ENCODE measurements at regions of chr13 and their contacts with region 1.

Region 1: DNA sequence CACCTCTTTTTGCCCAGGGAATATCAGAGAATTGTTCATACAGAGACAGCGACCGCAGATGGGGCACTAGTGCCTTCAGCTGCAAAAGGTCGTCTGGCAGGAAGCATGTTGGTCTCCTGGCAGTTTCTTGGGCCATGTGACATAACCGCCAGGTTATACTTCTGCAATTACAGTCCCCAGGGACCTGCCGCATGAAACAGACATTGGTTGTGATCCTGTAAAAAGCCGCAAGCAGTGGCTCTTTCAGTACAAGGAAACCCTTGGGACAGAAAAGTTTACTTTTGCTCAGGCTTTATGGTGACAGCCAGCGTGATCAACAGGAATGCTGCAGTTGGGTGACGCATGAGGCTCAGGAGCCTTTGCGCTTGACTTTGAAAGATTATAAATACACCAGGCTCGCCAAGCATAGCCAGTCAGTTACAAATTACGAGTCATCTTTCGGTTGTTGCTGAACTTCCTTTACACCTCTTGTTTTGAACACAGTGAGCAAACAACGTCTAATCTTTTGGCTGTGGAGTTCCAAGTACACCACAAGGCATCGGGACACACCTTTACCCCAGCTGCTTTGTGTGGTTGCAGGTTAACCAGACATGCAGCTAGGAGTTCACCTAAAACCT is 50.5 kb upstream of the UBE2L5 start:
- DNase-seq: peak; percentile 91
- H3K4me3 Mint-ChIP-seq: peak overlapping the region; percentile 85
- H3K27ac Mint-ChIP-seq: peak overlapping the region; percentile 91
- H3K4me1 Mint-ChIP-seq: peaks cover 75% of the 10 kb centered on the region
- H3K27me3 Mint-ChIP-seq: no peaks in the 10 kb centered on the region

Region 2: DNA sequence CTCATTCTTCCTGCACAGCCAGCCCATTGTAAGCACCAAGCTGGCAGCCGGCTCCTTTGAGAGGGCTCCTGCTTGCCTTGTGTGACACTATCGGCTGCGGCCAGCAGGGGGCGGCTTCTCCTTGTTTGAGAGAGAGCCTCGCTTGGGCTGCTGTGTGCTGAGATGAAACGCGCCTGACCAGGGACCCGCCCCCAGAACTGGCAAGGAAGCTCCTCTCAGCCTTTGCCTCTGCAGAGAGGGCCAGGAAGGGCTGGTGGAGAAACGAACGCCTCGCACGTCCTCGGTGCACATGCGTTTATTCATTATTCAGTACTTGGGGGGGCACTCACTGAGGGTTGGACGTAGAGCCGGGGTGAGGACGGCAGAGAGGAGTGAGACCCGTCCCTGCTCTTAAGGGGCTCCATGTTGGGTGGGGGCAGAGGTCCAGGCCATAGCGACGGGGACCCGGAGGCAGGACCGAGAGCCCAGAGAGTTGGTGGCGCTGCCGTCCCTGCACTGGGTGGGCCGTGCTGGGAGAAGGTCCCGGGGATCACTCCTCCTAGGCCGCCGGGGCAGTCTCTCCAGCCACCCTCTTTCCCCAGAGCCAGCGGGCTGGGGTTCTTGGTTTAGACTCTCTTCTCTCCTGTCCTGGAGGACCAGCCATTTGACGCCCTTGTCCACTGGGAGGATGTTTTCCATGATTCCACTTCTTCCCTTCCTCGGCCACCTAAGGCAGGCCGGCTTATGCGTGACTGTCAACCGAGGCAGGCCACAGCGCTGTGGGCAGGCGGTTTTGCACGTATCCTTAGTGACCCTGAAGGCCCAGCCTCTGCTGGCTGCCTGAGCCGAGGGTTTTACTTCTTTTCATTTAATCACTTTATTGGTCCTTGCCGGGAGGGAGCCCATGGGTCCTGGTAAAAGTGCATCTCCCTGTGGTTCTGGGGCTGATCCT is 238.9 kb before region 1 on chr13:
- intact Hi-C with region 1: loop called (anchors 5 kb)
- DNase-seq: peak; percentile 99
- H3K4me3 Mint-ChIP-seq: peak overlapping the region; percentile 19
- H3K27ac Mint-ChIP-seq: peak overlapping the region; percentile 59
- H3K4me1 Mint-ChIP-seq: peaks cover 19% of the 10 kb centered on the region
- H3K27me3 Mint-ChIP-seq: no peaks in the 10 kb centered on the region

Region 3: DNA sequence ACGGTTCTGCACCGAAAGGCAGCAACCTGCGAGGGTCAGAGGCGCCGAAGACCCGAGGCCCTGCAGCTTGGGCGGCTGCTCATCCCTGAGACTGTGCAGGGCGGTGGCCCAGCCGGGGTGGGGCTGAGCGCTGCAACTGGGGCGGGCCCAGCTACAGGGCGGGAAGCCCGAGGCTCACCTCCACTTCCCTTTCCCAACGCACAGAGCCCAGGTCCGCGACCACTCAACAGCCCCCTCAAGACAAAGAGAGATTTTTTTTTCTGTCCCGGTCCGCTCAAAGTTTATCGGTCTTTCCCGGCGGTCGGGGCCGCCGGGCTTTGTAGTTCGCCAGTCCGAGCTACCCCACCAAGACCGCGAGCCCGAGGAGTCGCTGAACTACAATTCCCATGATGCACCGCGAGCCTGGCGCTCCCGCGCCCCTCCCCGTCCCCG is 65.0 kb before region 1 on chr13:
- intact Hi-C with region 1: loop called (anchors 1 kb)
- DNase-seq: peak; percentile 98
- H3K4me3 Mint-ChIP-seq: peak overlapping the region; percentile 89
- H3K27ac Mint-ChIP-seq: peak overlapping the region; percentile 87
- H3K4me1 Mint-ChIP-seq: peaks cover 46% of the 10 kb centered on the region
- H3K27me3 Mint-ChIP-seq: no peaks in the 10 kb centered on the region

Region 4: GRCh38 chr13:30388406-30389283 is 16.9 kb after region 1 on chr13:
- intact Hi-C with region 1: loop called (anchors 1 kb)
- DNase-seq: no peak
- H3K4me3 Mint-ChIP-seq: peak overlapping the region; percentile 74
- H3K27ac Mint-ChIP-seq: peak overlapping the region; percentile 86
- H3K4me1 Mint-ChIP-seq: peaks cover 42% of the 10 kb centered on the region
- H3K27me3 Mint-ChIP-seq: no peaks in the 10 kb centered on the region

Region 5: GRCh38 chr13:30422054-30422839 is 50.5 kb after region 1 on chr13 and contains the start of gene UBE2L5:
- intact Hi-C with region 1: loop called (anchors 5 kb)
- DNase-seq: peak; percentile 95
- H3K4me3 Mint-ChIP-seq: peak within 1 kb of the TSS; percentile 89
- H3K27ac Mint-ChIP-seq: peak within 1 kb of the TSS; percentile 86
- H3K4me1 Mint-ChIP-seq: peaks cover 26% of the 10 kb centered on the region
- H3K27me3 Mint-ChIP-seq: no peaks in the 10 kb centered on the region
- total RNA-seq, gene UBE2L5: not detected in 2 replicates

Region 6: DNA sequence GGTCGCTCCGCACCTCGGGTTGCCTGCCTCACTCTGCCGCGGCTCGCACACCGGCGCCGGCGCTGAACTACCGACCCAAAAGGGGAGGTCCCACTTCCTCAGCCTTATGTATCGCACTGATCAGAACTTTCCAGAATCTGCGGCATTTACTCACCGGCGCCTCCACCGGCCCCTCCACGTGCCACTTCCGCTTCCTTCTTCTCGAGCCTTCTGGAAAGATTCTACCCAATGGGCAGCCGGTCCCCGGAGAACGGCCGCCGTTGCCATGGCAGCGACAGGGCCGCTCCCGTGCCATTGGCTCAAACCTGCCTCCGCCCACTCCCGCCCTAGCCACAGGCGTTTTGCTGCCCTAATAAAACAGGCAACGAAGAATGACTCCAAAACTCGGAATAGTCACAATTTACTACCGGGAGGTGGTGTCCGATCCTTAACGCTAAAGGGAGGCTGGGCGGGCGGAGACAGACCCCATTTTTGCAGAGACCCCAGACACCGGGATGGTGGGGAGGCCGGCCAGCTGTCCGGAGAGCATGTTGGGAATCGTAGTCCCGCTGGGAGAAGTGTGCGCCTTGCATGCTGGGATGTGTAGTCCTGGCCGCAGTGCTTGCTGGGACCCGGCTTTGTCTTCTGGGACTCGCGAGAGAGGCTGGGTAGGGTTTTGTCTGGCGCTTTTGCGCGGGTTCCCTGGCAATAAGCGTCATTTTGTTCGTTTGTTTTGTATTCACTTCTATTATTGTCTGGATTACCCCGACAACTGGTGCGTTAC is 790.3 kb after region 1 on chr13 and contains the start of gene HSPH1:
- intact Hi-C with region 1: loop called (anchors 10 kb)
- DNase-seq: peak; percentile 100
- H3K4me3 Mint-ChIP-seq: peak within 1 kb of the TSS; percentile 99
- H3K27ac Mint-ChIP-seq: peak within 1 kb of the TSS; percentile 99
- H3K4me1 Mint-ChIP-seq: peaks cover 45% of the 10 kb centered on the region
- H3K27me3 Mint-ChIP-seq: peaks cover 2% of the 10 kb centered on the region
- total RNA-seq, gene HSPH1: 381 and 385 TPM in 2 replicates

Measured in activated CD4-positive, alpha-beta T cell treated with anti-CD3 and anti-CD28 coated beads, Interleukin-2, amount 10 ng/mL, durations not matched to agents 24 days and 14 days (primary cell).